ENCODE measurements at regions of chr19 and their contacts with region 1.

Region 1: GRCh38 chr19:17938092-17938845 is 5.5 kb downstream of the CCDC124 start:
- DNase-seq: peak; percentile 69 to 90 (median 83)
- ATAC-seq: peak; percentile 99
- H3K4me3 ChIP-seq: no peak overlapping the region
- H3K4me3 Mint-ChIP-seq: no peak overlapping the region
- H3K27ac ChIP-seq: no peak overlapping the region
- H3K27ac Mint-ChIP-seq: no peak overlapping the region
- H3K4me1 ChIP-seq: peaks cover 7% of the 10 kb centered on the region
- H3K4me1 Mint-ChIP-seq: peaks cover 8% of the 10 kb centered on the region
- H3K27me3 ChIP-seq: no peaks in the 10 kb centered on the region
- H3K27me3 Mint-ChIP-seq: no peaks in the 10 kb centered on the region
- CTCF ChIP-seq: peak; percentile 82

Region 2: DNA sequence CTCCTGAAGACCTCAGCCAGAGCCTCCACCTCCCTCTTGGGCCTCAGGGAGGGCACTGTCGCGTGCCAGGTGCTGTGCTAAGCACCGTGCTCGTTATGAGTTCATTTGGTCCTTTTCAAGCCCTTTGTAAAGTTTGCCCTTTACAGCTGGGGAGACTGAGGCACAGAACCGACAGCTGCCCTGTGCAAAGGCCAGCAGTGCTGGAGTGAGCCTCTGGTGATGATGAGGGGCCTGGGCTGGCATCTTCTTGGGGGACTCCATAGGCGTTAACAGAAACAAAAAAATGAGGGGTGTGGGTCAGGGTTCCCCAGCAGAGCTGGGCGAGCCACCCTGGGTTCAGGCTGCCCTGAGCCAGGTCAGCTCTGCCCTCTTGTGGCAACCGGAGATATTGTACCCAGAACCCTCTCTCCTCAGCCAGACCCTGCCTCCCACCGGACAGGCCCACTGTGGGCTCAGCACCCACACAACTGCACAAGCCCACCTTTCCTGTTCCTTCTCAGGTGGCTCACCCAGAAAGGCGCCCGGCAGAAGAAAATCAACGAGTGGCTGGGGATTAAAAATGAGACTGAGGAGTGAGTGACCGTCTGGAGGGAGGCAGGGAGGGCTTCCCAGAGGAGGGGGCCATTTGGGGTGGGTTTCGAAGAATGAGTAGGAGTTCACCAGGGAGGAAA is 229.8 kb after region 1 on chr19:
- CTCF ChIA-PET with region 1: interaction called, 10 read pairs
- POLR2A ChIA-PET with region 1: no interaction called
- intact Hi-C with region 1: loop called (anchors 1 to 2 kb)
- DNase-seq: peak in 8 of 9 experiments; percentile 44 to 77 (median 64)
- ATAC-seq: peak; percentile 98
- H3K4me3 ChIP-seq: no peak overlapping the region
- H3K4me3 Mint-ChIP-seq: no peak overlapping the region
- H3K27ac ChIP-seq: no peak overlapping the region
- H3K27ac Mint-ChIP-seq: no peak overlapping the region
- H3K4me1 ChIP-seq: peaks cover 6% of the 10 kb centered on the region
- H3K4me1 Mint-ChIP-seq: peaks cover 2% of the 10 kb centered on the region
- H3K27me3 ChIP-seq: no peaks in the 10 kb centered on the region
- H3K27me3 Mint-ChIP-seq: no peaks in the 10 kb centered on the region
- CTCF ChIP-seq: peak; percentile 69

Region 3: GRCh38 chr19:18603255-18603957 is 665.1 kb after region 1 on chr19:
- CTCF ChIA-PET with region 1: no interaction called
- POLR2A ChIA-PET with region 1: no interaction called
- intact Hi-C with region 1: no loop called
- DNase-seq: peak in 2 of 9 experiments; percentile 45 to 55
- ATAC-seq: peak; percentile 76
- H3K4me3 ChIP-seq: no peak overlapping the region
- H3K4me3 Mint-ChIP-seq: no peak overlapping the region
- H3K27ac ChIP-seq: no peak overlapping the region
- H3K27ac Mint-ChIP-seq: no peak overlapping the region
- H3K4me1 ChIP-seq: no peaks in the 10 kb centered on the region
- H3K4me1 Mint-ChIP-seq: peaks cover 14% of the 10 kb centered on the region
- H3K27me3 ChIP-seq: peaks cover 26 to 42% of the 10 kb centered on the region in 2 experiments
- H3K27me3 Mint-ChIP-seq: peaks cover 50% of the 10 kb centered on the region
- CTCF ChIP-seq: no peak

Region 4: DNA sequence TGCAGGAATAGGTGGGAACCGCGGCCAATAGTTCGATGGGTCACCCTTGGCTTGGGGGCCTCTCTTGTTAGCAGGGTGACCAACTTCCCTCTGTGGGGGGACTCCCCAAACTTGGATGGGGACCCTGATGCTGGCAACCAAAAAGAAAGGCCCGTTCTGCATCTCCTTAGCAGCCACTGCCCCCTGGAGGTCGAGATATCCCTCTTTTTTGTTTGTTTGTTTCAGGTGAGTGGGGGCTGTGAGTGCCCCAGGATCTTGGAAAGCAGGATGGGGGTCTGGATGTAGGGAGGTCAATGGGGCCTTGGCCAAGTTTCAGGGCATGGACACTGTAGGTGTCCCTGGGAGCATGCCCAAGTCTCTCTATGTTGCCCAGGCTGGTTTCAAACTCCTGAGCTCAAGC is 737.5 kb after region 1 on chr19:
- CTCF ChIA-PET with region 1: no interaction called
- POLR2A ChIA-PET with region 1: no interaction called
- intact Hi-C with region 1: no loop called
- DNase-seq: peak in 4 of 9 experiments; percentile 22 to 50 (median 29)
- ATAC-seq: no peak
- H3K4me3 ChIP-seq: no peak overlapping the region
- H3K4me3 Mint-ChIP-seq: no peak overlapping the region
- H3K27ac ChIP-seq: no peak overlapping the region
- H3K27ac Mint-ChIP-seq: no peak overlapping the region
- H3K4me1 ChIP-seq: no peaks in the 10 kb centered on the region
- H3K4me1 Mint-ChIP-seq: no peaks in the 10 kb centered on the region
- H3K27me3 ChIP-seq: no peaks in the 10 kb centered on the region
- H3K27me3 Mint-ChIP-seq: no peaks in the 10 kb centered on the region
- CTCF ChIP-seq: no peak